Mammary epithelial cell (primary cell): ENCODE measurements at regions of chr14 and their contacts with region 1.

Region 1: GRCh38 chr14:31360919-31361662 is 59.3 kb downstream of the HEATR5A start:
- DNase-seq: peak; percentile 79
- H3K4me3 ChIP-seq: no peak overlapping the region
- H3K27ac ChIP-seq: peak overlapping the region; percentile 98
- H3K4me1 ChIP-seq: peaks cover 18% of the 10 kb centered on the region
- H3K27me3 ChIP-seq: no peaks in the 10 kb centered on the region
- CTCF ChIP-seq: no peak

Region 2: GRCh38 chr14:30656190-30656632 is 704.9 kb before region 1 on chr14:
- CTCF ChIA-PET with region 1: no interaction called
- dilution Hi-C with region 1: no loop called
- in situ Hi-C with region 1: no loop called
- intact Hi-C with region 1: loop called (anchors 5 kb)
- DNase-seq: peak; percentile 8
- H3K4me3 ChIP-seq: no peak overlapping the region
- H3K27ac ChIP-seq: no peak overlapping the region
- H3K4me1 ChIP-seq: no peaks in the 10 kb centered on the region
- H3K27me3 ChIP-seq: no peaks in the 10 kb centered on the region
- CTCF ChIP-seq: peak; percentile 79 to 89

Region 3: GRCh38 chr14:31142455-31143087 is 218.5 kb before region 1 on chr14:
- CTCF ChIA-PET with region 1: no interaction called
- dilution Hi-C with region 1: no loop called
- in situ Hi-C with region 1: no loop called
- intact Hi-C with region 1: loop called (anchors 5 kb)
- DNase-seq: no peak
- H3K4me3 ChIP-seq: no peak overlapping the region
- H3K27ac ChIP-seq: no peak overlapping the region
- H3K4me1 ChIP-seq: no peaks in the 10 kb centered on the region
- H3K27me3 ChIP-seq: no peaks in the 10 kb centered on the region
- CTCF ChIP-seq: no peak

Region 4: GRCh38 chr14:31172084-31172483 is 189.0 kb before region 1 on chr14:
- CTCF ChIA-PET with region 1: no interaction called
- dilution Hi-C with region 1: no loop called
- in situ Hi-C with region 1: no loop called
- intact Hi-C with region 1: loop called (anchors 10 kb)
- DNase-seq: no peak
- H3K4me3 ChIP-seq: no peak overlapping the region
- H3K27ac ChIP-seq: no peak overlapping the region
- H3K4me1 ChIP-seq: peaks cover 6% of the 10 kb centered on the region
- H3K27me3 ChIP-seq: no peaks in the 10 kb centered on the region
- CTCF ChIP-seq: no peak

Region 5: GRCh38 chr14:31449971-31450610 is 89.0 kb after region 1 on chr14:
- CTCF ChIA-PET with region 1: no interaction called
- dilution Hi-C with region 1: no loop called
- in situ Hi-C with region 1: no loop called
- intact Hi-C with region 1: loop called (anchors 5 kb)
- DNase-seq: peak; percentile 28
- H3K4me3 ChIP-seq: no peak overlapping the region
- H3K27ac ChIP-seq: no peak overlapping the region
- H3K4me1 ChIP-seq: no peaks in the 10 kb centered on the region
- H3K27me3 ChIP-seq: no peaks in the 10 kb centered on the region
- CTCF ChIP-seq: peak; percentile 56 to 59

Region 6: GRCh38 chr14:31530136-31530535 is 169.0 kb after region 1 on chr14:
- CTCF ChIA-PET with region 1: no interaction called
- dilution Hi-C with region 1: no loop called
- in situ Hi-C with region 1: no loop called
- intact Hi-C with region 1: no loop called
- DNase-seq: no peak
- H3K4me3 ChIP-seq: no peak overlapping the region
- H3K27ac ChIP-seq: no peak overlapping the region
- H3K4me1 ChIP-seq: peaks cover 3% of the 10 kb centered on the region
- H3K27me3 ChIP-seq: no peaks in the 10 kb centered on the region
- CTCF ChIP-seq: no peak